RWPE1 (cell line): ENCODE measurements at regions of chr17 and their contacts with region 1.

Region 1: GRCh38 chr17:39153599-39154051 is 2.2 kb upstream of the PLXDC1 start:
- DNase-seq: peak; percentile 84
- H3K27ac ChIP-seq: peak overlapping the region; percentile 90
- CTCF ChIP-seq: no peak

Region 2: GRCh38 chr17:38982858-38983746 is 170.5 kb before region 1 on chr17:
- CTCF ChIA-PET with region 1: interaction called, 91 read pairs
- POLR2A ChIA-PET with region 1: no interaction called
- DNase-seq: peak; percentile 65
- H3K27ac ChIP-seq: no peak overlapping the region
- CTCF ChIP-seq: peak; percentile 88